ENCODE measurements at regions of chr1 and their contacts with region 1.

Region 1: GRCh38 chr1:209229494-209230059 is 353.9 kb upstream of the CAMK1G start:
- DNase-seq: peak; percentile 87
- H3K4me3 Mint-ChIP-seq: no peak overlapping the region
- H3K27ac Mint-ChIP-seq: no peak overlapping the region
- H3K4me1 Mint-ChIP-seq: peaks cover 13% of the 10 kb centered on the region
- H3K27me3 Mint-ChIP-seq: no peaks in the 10 kb centered on the region
- CTCF ChIP-seq: no peak

Region 2: DNA sequence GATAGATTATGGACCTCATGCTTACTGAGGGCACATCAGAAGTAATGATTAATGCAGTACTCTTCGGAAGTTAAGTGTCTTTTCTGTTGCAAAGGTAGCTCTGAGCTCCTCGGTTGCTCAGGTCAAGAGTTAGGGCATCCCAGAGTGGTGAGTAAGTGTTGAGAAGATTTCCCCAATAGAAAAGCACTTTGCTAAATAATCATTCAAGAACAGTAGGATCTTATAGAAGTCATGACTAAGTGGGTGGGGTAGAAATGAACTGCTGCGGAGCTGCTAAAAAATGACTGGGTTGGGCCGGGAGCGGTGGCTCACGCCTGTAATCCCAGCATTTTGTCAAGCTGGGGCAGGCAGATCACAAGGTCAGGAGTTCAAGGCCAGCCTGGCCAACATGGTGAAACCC is 294.6 kb before region 1 on chr1:
- CTCF ChIA-PET with region 1: no interaction called
- POLR2A ChIA-PET with region 1: no interaction called
- intact Hi-C with region 1: no loop called
- DNase-seq: peak; percentile 27
- H3K4me3 Mint-ChIP-seq: no peak overlapping the region
- H3K27ac Mint-ChIP-seq: peak overlapping the region; percentile 58
- H3K4me1 Mint-ChIP-seq: peaks cover 7% of the 10 kb centered on the region
- H3K27me3 Mint-ChIP-seq: no peaks in the 10 kb centered on the region
- CTCF ChIP-seq: no peak

Region 3: DNA sequence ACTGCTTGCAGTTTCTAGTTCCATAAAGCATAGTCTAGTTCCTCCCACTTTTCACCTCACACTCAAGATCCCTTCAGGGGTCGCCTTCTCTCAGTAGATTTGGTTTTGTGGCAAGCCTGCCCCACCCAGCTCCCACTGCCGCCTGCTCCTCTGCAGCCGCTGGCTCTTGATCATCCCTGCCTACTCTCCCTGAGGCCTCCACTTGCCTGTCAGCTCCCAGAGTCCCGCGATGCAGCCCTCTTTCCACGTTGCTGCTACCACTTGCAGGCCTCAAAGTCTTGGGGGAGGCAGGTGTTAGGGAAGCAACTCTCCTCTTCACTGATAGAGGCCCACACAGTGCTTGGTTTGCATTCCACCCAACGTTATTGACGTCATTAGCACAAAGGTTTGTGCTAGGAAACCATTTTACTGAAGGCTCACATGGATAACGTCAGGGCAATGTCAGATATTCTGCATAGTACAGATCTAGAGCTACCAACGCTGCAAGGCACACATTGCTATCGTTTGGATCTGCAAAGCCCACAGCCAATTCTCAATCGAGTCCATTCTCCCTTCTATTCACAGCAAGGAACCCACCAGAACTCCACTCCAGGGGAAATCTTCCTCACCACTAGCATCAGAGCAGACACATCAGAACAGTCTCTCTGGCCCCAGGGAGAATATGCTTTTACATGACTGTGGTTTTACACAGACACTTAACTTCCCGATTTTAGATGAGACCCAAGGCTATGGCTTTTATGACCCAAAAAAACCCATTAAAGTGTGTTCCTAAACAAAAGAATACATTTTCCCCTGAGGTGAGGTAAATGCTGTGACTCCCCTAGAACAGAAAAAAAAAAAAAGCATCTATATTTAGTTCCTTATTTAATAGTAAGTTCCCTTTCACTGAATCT is 165.6 kb before region 1 on chr1:
- CTCF ChIA-PET with region 1: no interaction called
- POLR2A ChIA-PET with region 1: no interaction called
- intact Hi-C with region 1: no loop called
- DNase-seq: no peak
- H3K4me3 Mint-ChIP-seq: no peak overlapping the region
- H3K27ac Mint-ChIP-seq: no peak overlapping the region
- H3K4me1 Mint-ChIP-seq: no peaks in the 10 kb centered on the region
- H3K27me3 Mint-ChIP-seq: no peaks in the 10 kb centered on the region
- CTCF ChIP-seq: no peak

Region 4: GRCh38 chr1:209241487-209241886 is 11.9 kb after region 1 on chr1:
- CTCF ChIA-PET with region 1: interaction called, 49 read pairs
- POLR2A ChIA-PET with region 1: interaction called, 12 read pairs
- intact Hi-C with region 1: no loop called
- DNase-seq: peak; percentile 63
- H3K4me3 Mint-ChIP-seq: no peak overlapping the region
- H3K27ac Mint-ChIP-seq: no peak overlapping the region
- H3K4me1 Mint-ChIP-seq: peaks cover 5% of the 10 kb centered on the region
- H3K27me3 Mint-ChIP-seq: peaks cover 14% of the 10 kb centered on the region
- CTCF ChIP-seq: no peak

Region 5: GRCh38 chr1:209443971-209444651 is 214.5 kb after region 1 on chr1:
- CTCF ChIA-PET with region 1: no interaction called
- POLR2A ChIA-PET with region 1: no interaction called
- intact Hi-C with region 1: no loop called
- DNase-seq: peak; percentile 54
- H3K4me3 Mint-ChIP-seq: no peak overlapping the region
- H3K27ac Mint-ChIP-seq: peak overlapping the region; percentile 17
- H3K4me1 Mint-ChIP-seq: peaks cover 24% of the 10 kb centered on the region
- H3K27me3 Mint-ChIP-seq: no peaks in the 10 kb centered on the region
- CTCF ChIP-seq: no peak